Dorsolateral prefrontal cortex (tissue), 120 donors: ENCODE measurements at regions of chr10 and their contacts with region 1.

Region 1: DNA sequence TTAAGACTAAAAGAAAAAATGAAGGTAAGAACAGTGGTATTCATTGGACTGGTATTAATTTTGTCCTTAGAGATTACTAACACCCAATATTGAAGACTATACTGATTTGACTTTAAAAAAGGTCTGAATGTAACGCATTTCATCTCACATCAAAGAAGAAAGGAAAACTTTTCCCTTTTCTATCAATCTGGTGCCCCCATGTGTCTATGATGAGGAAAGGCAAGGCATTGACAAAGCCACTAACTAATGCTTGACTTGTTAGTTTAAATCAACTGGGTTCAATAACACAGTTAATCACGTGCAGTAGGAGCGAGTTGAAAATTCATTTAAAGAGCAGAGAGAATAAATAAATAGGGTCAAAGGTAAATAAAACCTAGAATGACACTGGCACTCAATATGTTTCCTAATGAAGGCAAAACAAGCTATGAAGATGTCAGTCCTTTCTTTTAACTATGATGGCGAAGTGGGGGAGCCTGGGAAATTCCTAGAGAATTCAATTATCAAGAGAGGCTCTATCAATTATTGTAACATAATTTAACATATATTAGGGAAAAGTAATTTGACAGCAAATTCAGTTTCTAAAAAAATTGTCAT is 180.9 kb downstream of the ANK3 start:
- DNase-seq: no peak
- H3K4me3 ChIP-seq: no peak overlapping the region
- H3K27ac ChIP-seq: peak overlapping the region in 29 of 59 donors; percentile 7 to 73 (median 34)
- H3K27me3 ChIP-seq: no peaks in the 10 kb centered on the region
- CTCF ChIP-seq: peak; percentile 26 to 88 (median 74)

Region 2: GRCh38 chr10:60099998-60100747 is 108.6 kb before region 1 on chr10:
- intact Hi-C with region 1: loop called (anchors 5 kb)
- DNase-seq: peak in 1 of 10 donors; percentile 33
- H3K4me3 ChIP-seq: no peak overlapping the region
- H3K27ac ChIP-seq: peak overlapping the region in 25 of 59 donors; percentile 0 to 78 (median 29)
- H3K27me3 ChIP-seq: no peaks in the 10 kb centered on the region
- CTCF ChIP-seq: peak; percentile 57 to 92 (median 76)

Region 3: DNA sequence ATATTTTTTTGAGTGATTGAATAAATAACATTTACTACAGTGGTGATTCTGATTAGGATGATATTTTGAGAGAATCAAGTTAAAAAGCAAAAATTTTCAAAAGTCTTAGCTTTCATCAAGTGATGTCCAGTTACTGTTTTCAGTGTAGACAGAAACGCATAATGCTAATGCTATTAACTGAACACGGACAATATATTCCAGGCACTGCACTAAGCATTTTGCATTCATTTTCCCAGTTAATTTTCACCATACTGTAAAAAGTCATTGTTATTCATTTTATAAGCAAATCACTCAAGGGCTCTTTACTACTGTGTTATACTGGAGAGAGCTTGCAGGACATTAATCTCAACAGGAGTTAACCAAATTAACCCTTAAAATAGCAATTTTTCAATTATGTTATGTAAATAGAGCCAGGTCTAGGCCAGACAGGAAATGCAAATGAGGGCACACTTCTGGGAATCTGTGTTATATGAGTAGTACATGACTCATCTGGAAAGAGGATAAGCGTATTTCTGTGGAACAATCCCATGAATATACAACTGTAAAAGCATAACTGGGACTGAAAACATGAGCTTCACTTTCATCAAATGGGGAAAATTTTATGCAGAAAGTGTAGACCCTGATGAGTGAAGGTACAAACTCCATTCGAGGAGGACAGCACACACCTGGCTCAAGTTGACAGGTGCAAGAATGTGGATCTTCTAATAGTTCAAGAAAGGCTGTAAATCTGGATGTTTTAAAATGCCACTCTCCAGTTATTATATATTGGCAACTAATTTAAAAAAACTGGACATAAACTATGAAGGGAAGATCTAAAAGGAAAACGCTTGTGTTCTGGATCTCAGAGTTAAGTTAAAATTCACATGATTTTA is 105.5 kb after region 1 on chr10:
- intact Hi-C with region 1: no loop called
- DNase-seq: no peak
- H3K4me3 ChIP-seq: no peak overlapping the region
- H3K27ac ChIP-seq: peak overlapping the region in 15 of 59 donors; percentile 0 to 75 (median 25)
- H3K27me3 ChIP-seq: no peaks in the 10 kb centered on the region
- CTCF ChIP-seq: no peak